ENCODE measurements at regions of chr11 and their contacts with region 1.

Region 1: GRCh38 chr11:71977743-71978418 is 20.8 kb upstream of the IL18BP start:
- DNase-seq: peak; percentile 69
- ATAC-seq: peak; percentile 63
- H3K4me3 Mint-ChIP-seq: no peak overlapping the region
- H3K27ac Mint-ChIP-seq: no peak overlapping the region
- H3K4me1 Mint-ChIP-seq: peaks cover 2% of the 10 kb centered on the region
- H3K27me3 Mint-ChIP-seq: no peaks in the 10 kb centered on the region

Region 2: GRCh38 chr11:71962428-71963038 is 15.3 kb before region 1 on chr11:
- CTCF ChIA-PET with region 1: interaction called, 20 read pairs
- POLR2A ChIA-PET with region 1: no interaction called
- intact Hi-C with region 1: no loop called
- DNase-seq: no peak
- ATAC-seq: peak; percentile 92
- H3K4me3 Mint-ChIP-seq: no peak overlapping the region
- H3K27ac Mint-ChIP-seq: peak overlapping the region; percentile 60
- H3K4me1 Mint-ChIP-seq: peaks cover 25% of the 10 kb centered on the region
- H3K27me3 Mint-ChIP-seq: no peaks in the 10 kb centered on the region

Region 3: DNA sequence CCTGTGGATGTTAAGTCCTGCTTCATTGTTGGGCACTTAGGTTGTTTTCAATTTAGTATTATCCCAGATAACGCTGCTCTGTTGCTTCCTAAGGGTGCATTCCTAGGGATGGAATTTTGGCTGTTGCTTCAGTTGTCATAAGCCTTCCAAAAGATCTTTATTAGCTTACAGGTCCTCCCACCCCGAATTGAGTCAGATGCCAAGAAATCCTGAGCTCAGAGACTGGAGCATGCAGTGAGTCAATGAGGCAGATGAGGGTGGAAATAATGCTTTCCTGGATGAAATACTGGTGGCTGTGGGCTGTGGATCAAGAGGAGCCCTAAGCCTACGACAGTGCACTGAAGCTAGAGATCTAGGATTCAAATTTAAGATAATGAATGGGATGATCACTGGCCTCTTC is 10.2 kb after region 1 on chr11:
- CTCF ChIA-PET with region 1: interaction called, 31 read pairs
- POLR2A ChIA-PET with region 1: no interaction called
- intact Hi-C with region 1: no loop called
- DNase-seq: no peak
- ATAC-seq: no peak
- H3K4me3 Mint-ChIP-seq: no peak overlapping the region
- H3K27ac Mint-ChIP-seq: no peak overlapping the region
- H3K4me1 Mint-ChIP-seq: peaks cover 6% of the 10 kb centered on the region
- H3K27me3 Mint-ChIP-seq: no peaks in the 10 kb centered on the region

Region 4: GRCh38 chr11:73463359-73463758 is 1485.5 kb after region 1 on chr11:
- CTCF ChIA-PET with region 1: no interaction called
- POLR2A ChIA-PET with region 1: no interaction called
- intact Hi-C with region 1: no loop called
- DNase-seq: no peak
- ATAC-seq: no peak
- H3K4me3 Mint-ChIP-seq: no peak overlapping the region
- H3K27ac Mint-ChIP-seq: no peak overlapping the region
- H3K4me1 Mint-ChIP-seq: no peaks in the 10 kb centered on the region
- H3K27me3 Mint-ChIP-seq: no peaks in the 10 kb centered on the region